ENCODE measurements at regions of chr7 and their contacts with region 1.

Region 1: GRCh38 chr7:43170571-43170970 is 58.1 kb downstream of the HECW1 start:
- DNase-seq: no peak
- ATAC-seq: no peak
- H3K4me3 ChIP-seq: no peak overlapping the region
- H3K27ac ChIP-seq: no peak overlapping the region
- H3K4me1 ChIP-seq: no peaks in the 10 kb centered on the region
- H3K27me3 ChIP-seq: peaks cover 10% of the 10 kb centered on the region
- CTCF ChIP-seq: no peak
- POLR2A ChIP-seq: no peak
- RAD21 ChIP-seq: no peak

Region 2: GRCh38 chr7:42617806-42618457 is 552.6 kb before region 1 on chr7:
- CTCF ChIA-PET with region 1: no interaction called
- POLR2A ChIA-PET with region 1: no interaction called
- dilution Hi-C with region 1: no loop called
- in situ Hi-C with region 1: no loop called
- intact Hi-C with region 1: no loop called
- DNase-seq: no peak
- ATAC-seq: no peak
- H3K4me3 ChIP-seq: no peak overlapping the region
- H3K27ac ChIP-seq: no peak overlapping the region
- H3K4me1 ChIP-seq: no peaks in the 10 kb centered on the region
- H3K27me3 ChIP-seq: no peaks in the 10 kb centered on the region; the same call in 1 of the 2 replicates
- CTCF ChIP-seq: no peak
- POLR2A ChIP-seq: no peak
- RAD21 ChIP-seq: no peak

Region 3: GRCh38 chr7:43454936-43455518 is 284.5 kb after region 1 on chr7:
- CTCF ChIA-PET with region 1: interaction called, 7 read pairs
- POLR2A ChIA-PET with region 1: no interaction called
- dilution Hi-C with region 1: no loop called
- in situ Hi-C with region 1: no loop called
- intact Hi-C with region 1: loop called (anchors 5 kb)
- DNase-seq: peak; percentile 42
- ATAC-seq: peak; percentile 63
- H3K4me3 ChIP-seq: no peak overlapping the region
- H3K27ac ChIP-seq: no peak overlapping the region
- H3K4me1 ChIP-seq: no peaks in the 10 kb centered on the region
- H3K27me3 ChIP-seq: peaks cover 5% of the 10 kb centered on the region
- CTCF ChIP-seq: peak; percentile 54
- POLR2A ChIP-seq: no peak
- RAD21 ChIP-seq: peak; percentile 48

Region 4: GRCh38 chr7:43977525-43977924 is 807.0 kb after region 1 on chr7:
- CTCF ChIA-PET with region 1: no interaction called
- POLR2A ChIA-PET with region 1: no interaction called
- dilution Hi-C with region 1: no loop called
- in situ Hi-C with region 1: no loop called
- intact Hi-C with region 1: no loop called
- DNase-seq: no peak
- ATAC-seq: no peak
- H3K4me3 ChIP-seq: no peak overlapping the region
- H3K27ac ChIP-seq: no peak overlapping the region
- H3K4me1 ChIP-seq: no peaks in the 10 kb centered on the region
- H3K27me3 ChIP-seq: no peaks in the 10 kb centered on the region
- CTCF ChIP-seq: no peak
- POLR2A ChIP-seq: no peak
- RAD21 ChIP-seq: no peak

Measured in IMR-90 (cell line).